ENCODE measurements at regions of chr20 and their contacts with region 1.

Region 1: DNA sequence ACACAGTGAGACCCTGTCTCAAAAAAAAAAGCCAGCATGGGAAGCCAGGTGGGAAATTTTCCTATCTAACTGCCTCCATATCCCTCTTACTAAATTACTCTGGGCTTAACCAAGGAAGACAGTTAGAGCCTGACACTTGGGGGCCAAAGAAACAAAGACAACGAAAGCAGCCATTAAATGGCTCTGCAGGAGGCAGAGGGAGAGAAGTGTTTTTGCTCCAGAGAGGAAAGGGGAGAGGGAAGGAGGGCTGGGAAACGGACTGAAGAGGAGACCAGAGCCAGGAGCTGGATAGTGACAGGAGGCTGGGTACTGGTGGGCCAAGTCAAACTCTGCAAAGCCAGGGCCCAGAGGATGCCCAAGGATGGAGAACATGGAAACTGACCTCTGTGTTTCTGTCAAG is 10.7 kb upstream of the TGIF2 start:
- DNase-seq: no peak
- H3K4me3 ChIP-seq: no peak overlapping the region
- H3K27me3 ChIP-seq: no peaks in the 10 kb centered on the region
- CTCF ChIP-seq: no peak

Region 2: DNA sequence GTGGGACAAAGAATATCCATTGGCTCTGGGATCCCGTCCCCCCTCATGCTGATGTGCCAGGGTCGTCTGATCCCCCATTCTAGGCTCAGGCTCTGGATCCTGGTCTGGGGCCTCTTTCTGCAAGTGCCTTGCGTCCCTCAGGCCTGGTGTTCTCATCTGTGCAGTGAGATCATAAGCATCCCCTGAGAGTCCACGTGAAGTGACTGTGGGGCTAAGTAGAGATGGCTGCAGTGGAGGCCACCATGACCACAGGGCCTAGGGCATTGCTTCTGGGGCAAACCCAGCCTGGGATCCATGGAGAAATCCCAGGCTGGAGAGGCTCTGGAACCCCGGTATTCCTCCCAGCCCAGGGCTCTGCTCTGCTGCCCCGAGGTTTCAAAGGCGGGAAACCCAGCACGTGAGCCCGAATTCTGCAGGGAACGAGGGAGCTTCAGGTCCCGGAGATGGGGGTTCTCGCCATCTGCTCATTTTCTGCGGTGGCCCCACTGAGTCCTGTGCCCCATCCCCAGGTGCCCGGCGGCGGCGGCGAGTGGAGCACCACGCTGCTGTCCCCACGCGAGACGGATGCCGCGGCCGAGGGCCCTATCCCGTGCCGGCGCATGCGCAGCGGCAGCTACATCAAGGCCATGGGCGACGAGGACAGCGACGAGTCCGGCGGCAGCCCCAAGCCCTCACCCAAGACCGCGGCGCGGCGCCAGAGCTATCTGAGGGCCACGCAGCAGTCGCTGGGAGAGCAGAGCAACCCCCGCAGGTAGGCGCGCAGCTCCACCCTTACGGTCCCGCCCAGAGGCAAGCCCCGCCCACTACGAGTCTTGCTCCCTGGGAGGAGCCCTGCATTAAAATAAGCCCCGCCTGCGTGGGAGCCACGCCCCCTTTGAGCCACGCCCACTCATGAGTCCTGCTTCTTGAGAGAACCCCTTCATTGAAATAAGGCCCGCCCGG is 126.9 kb before region 1 on chr20:
- CTCF ChIA-PET with region 1: no interaction called
- POLR2A ChIA-PET with region 1: no interaction called
- DNase-seq: no peak
- H3K4me3 ChIP-seq: peak overlapping the region; percentile 43
- H3K27me3 ChIP-seq: peaks cover 8% of the 10 kb centered on the region
- CTCF ChIP-seq: no peak

Region 3: DNA sequence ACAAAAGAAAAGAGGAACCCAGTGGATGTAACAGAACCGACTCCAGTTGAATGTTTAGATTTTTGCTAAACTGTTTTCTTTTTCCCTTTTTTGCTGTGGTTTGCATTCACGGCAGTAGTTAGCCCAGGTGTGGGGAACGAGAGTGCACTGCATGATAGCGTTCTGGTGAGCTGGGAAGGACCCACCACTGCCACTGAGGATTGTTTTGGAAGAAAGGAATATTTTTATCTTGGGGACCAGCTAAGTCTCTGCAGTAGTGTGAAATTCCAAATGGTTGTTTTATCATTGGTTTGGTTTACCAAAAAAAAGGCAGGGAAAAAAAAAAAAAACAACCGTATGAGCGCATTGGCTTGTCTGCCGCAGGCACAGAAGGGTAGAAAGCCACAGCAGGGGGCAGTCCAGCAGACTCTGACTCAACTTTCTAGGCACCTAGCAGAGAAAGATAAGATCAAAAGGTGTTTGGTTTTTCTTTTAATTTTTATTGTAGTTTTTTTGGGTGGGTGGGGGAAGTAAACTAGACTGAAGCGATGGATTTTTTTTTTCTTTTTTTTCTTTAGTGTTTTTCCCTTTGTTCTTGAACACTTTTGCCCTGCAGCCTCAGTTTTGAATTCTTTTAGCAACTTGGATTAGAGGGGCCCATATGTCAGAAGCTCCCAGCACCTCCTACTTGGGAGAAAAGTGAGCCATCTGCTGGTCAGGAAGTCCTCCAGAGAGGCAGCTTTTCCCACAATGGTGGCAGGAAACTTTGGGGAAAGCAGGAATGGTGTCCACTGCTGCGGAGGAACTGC is 29.3 kb after region 1 on chr20:
- CTCF ChIA-PET with region 1: interaction called, 15 read pairs
- POLR2A ChIA-PET with region 1: no interaction called
- DNase-seq: no peak
- H3K4me3 ChIP-seq: no peak overlapping the region
- H3K27me3 ChIP-seq: no peaks in the 10 kb centered on the region
- CTCF ChIP-seq: peak; percentile 61

Region 4: DNA sequence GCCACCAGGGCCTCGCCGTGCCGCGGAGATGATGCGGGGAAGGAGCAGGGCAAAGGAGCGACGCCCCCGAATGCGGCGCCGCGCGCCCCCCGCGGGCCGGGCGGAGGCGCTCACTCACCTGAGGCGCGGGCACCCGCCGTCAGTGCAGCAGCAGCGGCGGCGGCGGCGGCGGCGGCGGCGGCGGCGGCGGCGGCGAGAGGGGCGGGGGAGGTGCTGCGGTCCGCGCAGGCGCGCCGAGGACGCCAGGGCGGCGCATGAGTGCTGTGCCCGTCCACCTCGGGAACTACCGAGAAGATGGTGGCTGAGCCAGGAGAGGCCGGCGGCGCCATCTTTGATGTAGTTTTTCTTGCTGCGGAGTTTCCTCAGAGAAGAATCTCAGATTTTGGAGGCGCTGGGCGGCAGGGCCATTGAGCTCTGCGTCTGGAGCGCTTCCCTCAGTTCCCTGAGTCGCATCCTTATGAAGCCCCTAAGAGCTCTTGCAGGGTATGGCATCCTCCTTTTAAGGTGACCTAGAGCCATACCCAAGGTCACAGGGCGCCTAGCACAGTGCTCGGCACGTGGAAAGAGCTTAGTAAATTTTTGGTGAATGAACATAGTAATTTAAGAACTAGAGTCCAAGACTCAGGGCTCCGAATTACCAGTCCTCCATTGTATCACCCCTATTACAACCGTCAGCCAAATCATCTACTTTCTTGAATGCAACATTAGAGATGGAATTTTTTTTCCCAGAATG is 183.4 kb after region 1 on chr20 and contains the start of gene NDRG3:
- CTCF ChIA-PET with region 1: no interaction called
- POLR2A ChIA-PET with region 1: no interaction called
- DNase-seq: peak; percentile 53
- H3K4me3 ChIP-seq: peak within 1 kb of the TSS; percentile 74
- H3K27me3 ChIP-seq: no peaks in the 10 kb centered on the region
- CTCF ChIP-seq: no peak
- polyA plus RNA-seq, gene NDRG3: 27.0 and 28.5 TPM in 2 replicates